Mammary epithelial cell (primary cell): ENCODE measurements at regions of chr1 and their contacts with region 1.

Region 1: DNA sequence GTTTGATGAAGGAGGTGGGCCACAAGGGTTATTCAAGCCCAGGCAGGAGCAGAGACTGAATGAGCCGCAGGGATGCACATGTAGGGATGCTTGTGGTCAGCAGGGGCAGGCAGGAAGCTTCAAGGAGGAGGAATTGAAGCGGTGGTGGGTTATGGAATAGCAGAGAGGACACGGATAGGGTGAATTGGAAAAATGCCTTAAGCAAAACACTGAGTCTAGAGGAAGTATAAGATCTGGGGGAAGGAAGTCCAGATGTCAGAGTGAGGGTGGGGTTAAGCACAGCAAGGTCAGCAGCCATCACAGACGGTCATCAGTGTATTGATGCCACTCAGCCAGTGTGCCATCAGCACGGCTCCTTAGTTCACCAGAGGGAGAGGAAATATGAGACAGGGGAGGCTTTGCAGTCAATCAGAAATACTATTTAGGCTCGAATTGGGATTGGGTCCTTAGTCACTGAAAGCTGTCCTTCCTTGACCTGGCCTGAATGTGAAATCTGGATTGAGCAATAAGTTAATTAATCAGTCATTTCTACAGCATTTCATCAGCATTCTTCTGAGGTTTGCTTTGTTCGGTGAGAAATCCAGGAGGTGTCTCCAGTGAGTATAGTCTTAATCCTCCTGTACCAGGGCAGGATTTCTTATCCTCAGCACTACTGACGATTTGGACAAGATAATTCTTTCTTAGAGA is 6.0 kb upstream of the LCE1F start:
- DNase-seq: peak; percentile 59
- H3K4me3 ChIP-seq: no peak overlapping the region
- H3K27ac ChIP-seq: peak overlapping the region; percentile 57
- H3K4me1 ChIP-seq: peaks cover 28% of the 10 kb centered on the region
- H3K27me3 ChIP-seq: no peaks in the 10 kb centered on the region
- CTCF ChIP-seq: peak; percentile 14 to 30

Region 2: GRCh38 chr1:151888972-151889570 is 879.9 kb before region 1 on chr1:
- CTCF ChIA-PET with region 1: no interaction called
- dilution Hi-C with region 1: no loop called
- in situ Hi-C with region 1: no loop called
- intact Hi-C with region 1: no loop called
- DNase-seq: no peak
- H3K4me3 ChIP-seq: no peak overlapping the region
- H3K27ac ChIP-seq: no peak overlapping the region
- H3K4me1 ChIP-seq: peaks cover 30% of the 10 kb centered on the region
- H3K27me3 ChIP-seq: no peaks in the 10 kb centered on the region
- CTCF ChIP-seq: peak; percentile 15 to 49

Region 3: DNA sequence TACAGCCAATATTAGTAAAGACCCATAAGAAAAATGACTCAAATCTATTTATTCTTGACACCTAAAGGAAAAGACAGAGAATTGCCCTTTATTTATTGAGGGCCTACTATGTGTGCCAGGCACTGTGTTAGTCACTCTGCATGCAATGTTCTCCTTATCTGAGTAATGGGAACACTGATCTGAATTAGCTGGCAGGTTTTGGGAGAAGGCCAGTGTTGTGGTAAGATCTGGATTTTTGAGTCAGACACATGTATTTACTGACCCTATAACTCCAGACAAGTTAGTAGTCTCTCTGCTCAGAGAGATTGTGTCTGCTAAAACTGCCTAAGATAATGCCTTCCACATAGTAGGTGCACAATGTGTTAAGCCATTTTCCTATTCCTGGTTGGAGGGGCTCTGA is 43.7 kb before region 1 on chr1:
- CTCF ChIA-PET with region 1: no interaction called
- dilution Hi-C with region 1: no loop called
- in situ Hi-C with region 1: no loop called
- intact Hi-C with region 1: no loop called
- DNase-seq: peak; percentile 19
- H3K4me3 ChIP-seq: no peak overlapping the region
- H3K27ac ChIP-seq: no peak overlapping the region
- H3K4me1 ChIP-seq: no peaks in the 10 kb centered on the region
- H3K27me3 ChIP-seq: no peaks in the 10 kb centered on the region
- CTCF ChIP-seq: no peak

Region 4: GRCh38 chr1:152745289-152745704 is 23.7 kb before region 1 on chr1:
- CTCF ChIA-PET with region 1: no interaction called
- dilution Hi-C with region 1: no loop called
- in situ Hi-C with region 1: no loop called
- intact Hi-C with region 1: loop called (anchors 2 kb)
- DNase-seq: peak; percentile 44
- H3K4me3 ChIP-seq: no peak overlapping the region
- H3K27ac ChIP-seq: no peak overlapping the region
- H3K4me1 ChIP-seq: peaks cover 58% of the 10 kb centered on the region
- H3K27me3 ChIP-seq: no peaks in the 10 kb centered on the region
- CTCF ChIP-seq: peak; percentile 14 to 35